CD8-positive, alpha-beta T cell (primary cell): ENCODE measurements at regions of chr5 and their contacts with region 1.

Region 1: DNA sequence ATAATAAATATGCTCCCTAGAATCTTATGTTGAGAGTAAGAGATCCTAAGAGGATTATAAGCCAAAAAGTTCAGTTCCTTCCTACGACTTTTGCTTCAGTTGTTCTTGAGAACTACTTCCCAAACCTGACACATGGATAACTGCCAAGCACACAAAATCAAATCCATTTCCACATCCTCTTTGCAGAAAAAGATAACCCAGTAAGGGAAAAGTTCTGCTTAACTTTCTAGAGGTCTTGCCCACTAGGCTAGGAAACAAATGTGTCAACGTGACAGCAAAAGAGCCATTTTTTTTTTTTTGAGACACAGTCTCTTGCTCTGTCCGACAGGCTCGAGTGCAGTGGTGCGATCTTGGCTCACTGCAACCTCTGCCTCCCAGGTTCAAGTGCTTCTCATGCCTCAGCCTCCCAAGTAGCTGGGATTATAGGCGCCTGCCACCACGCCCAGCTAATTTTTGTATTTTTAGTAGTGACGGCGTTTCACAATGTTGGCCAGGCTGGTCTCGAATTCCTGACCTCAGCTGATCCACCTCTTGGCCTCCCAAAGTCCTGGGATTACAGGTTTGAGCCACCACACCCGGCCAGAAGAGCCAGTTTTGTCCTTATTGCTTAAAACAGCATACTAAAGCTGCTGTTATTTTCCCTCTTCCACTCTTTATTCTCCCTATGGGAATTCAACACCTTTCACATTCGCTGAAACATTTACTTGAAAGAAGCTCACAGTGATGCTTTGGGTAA is 24.2 kb downstream of the CSNK1A1 start:
- DNase-seq: no peak
- ATAC-seq: no peak
- H3K4me3 ChIP-seq: no peak overlapping the region
- H3K4me3 Mint-ChIP-seq: peak overlapping the region; percentile 10
- H3K27ac ChIP-seq: no peak overlapping the region
- H3K27ac Mint-ChIP-seq: no peak overlapping the region
- H3K4me1 ChIP-seq: peaks cover 66% of the 10 kb centered on the region
- H3K4me1 Mint-ChIP-seq: peaks cover 90% of the 10 kb centered on the region
- H3K27me3 ChIP-seq: no peaks in the 10 kb centered on the region
- H3K27me3 Mint-ChIP-seq: no peaks in the 10 kb centered on the region
- CTCF ChIP-seq: no peak

Region 2: GRCh38 chr5:149471406-149472183 is 55.4 kb before region 1 on chr5:
- CTCF ChIA-PET with region 1: no interaction called
- POLR2A ChIA-PET with region 1: no interaction called
- intact Hi-C with region 1: no loop called
- DNase-seq: no peak
- ATAC-seq: no peak
- H3K4me3 ChIP-seq: no peak overlapping the region
- H3K4me3 Mint-ChIP-seq: no peak overlapping the region
- H3K27ac ChIP-seq: no peak overlapping the region
- H3K27ac Mint-ChIP-seq: no peak overlapping the region
- H3K4me1 ChIP-seq: no peaks in the 10 kb centered on the region
- H3K4me1 Mint-ChIP-seq: no peaks in the 10 kb centered on the region
- H3K27me3 ChIP-seq: peaks cover 0 to 7% of the 10 kb centered on the region in 2 experiments
- H3K27me3 Mint-ChIP-seq: peaks cover 14% of the 10 kb centered on the region
- CTCF ChIP-seq: no peak

Region 3: GRCh38 chr5:149489605-149490037 is 37.4 kb before region 1 on chr5:
- CTCF ChIA-PET with region 1: no interaction called
- POLR2A ChIA-PET with region 1: no interaction called
- intact Hi-C with region 1: loop called in 1 of 2 experiments (anchors 5 kb)
- DNase-seq: no peak
- ATAC-seq: no peak
- H3K4me3 ChIP-seq: no peak overlapping the region
- H3K4me3 Mint-ChIP-seq: no peak overlapping the region
- H3K27ac ChIP-seq: no peak overlapping the region
- H3K27ac Mint-ChIP-seq: no peak overlapping the region
- H3K4me1 ChIP-seq: no peaks in the 10 kb centered on the region
- H3K4me1 Mint-ChIP-seq: peaks cover 9% of the 10 kb centered on the region
- H3K27me3 ChIP-seq: no peaks in the 10 kb centered on the region
- H3K27me3 Mint-ChIP-seq: no peaks in the 10 kb centered on the region
- CTCF ChIP-seq: no peak

Region 4: DNA sequence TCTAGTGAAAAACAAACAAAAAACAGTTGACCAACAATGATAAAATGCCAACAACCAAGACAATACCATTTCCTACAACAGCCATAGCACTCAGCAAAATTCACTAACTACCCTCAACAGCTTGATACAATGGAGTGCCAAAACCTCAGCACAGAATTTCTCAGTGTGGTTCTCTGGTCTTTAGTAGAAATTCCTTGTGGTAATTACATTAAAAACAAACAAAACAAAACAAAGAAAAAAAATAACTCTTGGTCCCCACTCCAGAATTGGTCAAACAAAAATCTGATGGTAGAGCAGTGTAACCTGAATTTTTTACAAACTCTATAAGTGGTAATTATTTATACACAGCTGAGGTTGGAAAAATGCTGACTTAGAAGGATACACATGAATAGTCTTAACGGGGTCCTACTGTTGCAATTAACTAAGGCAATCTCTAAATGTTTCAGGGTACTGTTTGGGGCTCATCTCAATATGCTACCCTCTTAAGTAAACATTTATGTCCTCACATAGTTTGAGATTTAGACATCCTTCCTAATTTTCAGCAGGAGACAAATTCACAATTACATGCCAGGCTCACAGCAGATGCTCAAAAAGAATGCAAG is 10.5 kb after region 1 on chr5:
- CTCF ChIA-PET with region 1: interaction called, 4 read pairs
- POLR2A ChIA-PET with region 1: no interaction called
- intact Hi-C with region 1: loop called in 1 of 2 experiments (anchors 1 kb)
- DNase-seq: no peak
- ATAC-seq: no peak
- H3K4me3 ChIP-seq: no peak overlapping the region
- H3K4me3 Mint-ChIP-seq: no peak overlapping the region
- H3K27ac ChIP-seq: no peak overlapping the region
- H3K27ac Mint-ChIP-seq: no peak overlapping the region
- H3K4me1 ChIP-seq: peaks cover 41% of the 10 kb centered on the region
- H3K4me1 Mint-ChIP-seq: peaks cover 70% of the 10 kb centered on the region
- H3K27me3 ChIP-seq: no peaks in the 10 kb centered on the region
- H3K27me3 Mint-ChIP-seq: no peaks in the 10 kb centered on the region
- CTCF ChIP-seq: no peak

Region 5: GRCh38 chr5:149596713-149597112 is 69.7 kb after region 1 on chr5:
- CTCF ChIA-PET with region 1: no interaction called
- POLR2A ChIA-PET with region 1: no interaction called
- intact Hi-C with region 1: no loop called
- DNase-seq: peak in 1 of 9 experiments; percentile 5
- ATAC-seq: no peak
- H3K4me3 ChIP-seq: no peak overlapping the region
- H3K4me3 Mint-ChIP-seq: no peak overlapping the region
- H3K27ac ChIP-seq: no peak overlapping the region
- H3K27ac Mint-ChIP-seq: no peak overlapping the region
- H3K4me1 ChIP-seq: no peaks in the 10 kb centered on the region
- H3K4me1 Mint-ChIP-seq: no peaks in the 10 kb centered on the region
- H3K27me3 ChIP-seq: no peaks in the 10 kb centered on the region
- H3K27me3 Mint-ChIP-seq: peaks cover 4% of the 10 kb centered on the region
- CTCF ChIP-seq: no peak

Region 6: GRCh38 chr5:150357326-150358260 is 830.6 kb after region 1 on chr5 and contains the start of gene TCOF1:
- CTCF ChIA-PET with region 1: no interaction called
- POLR2A ChIA-PET with region 1: no interaction called
- intact Hi-C with region 1: no loop called
- DNase-seq: peak; percentile 93 to 99 (median 97)
- ATAC-seq: peak; percentile 99
- H3K4me3 ChIP-seq: peak within 1 kb of the TSS; percentile 62 to 74
- H3K4me3 Mint-ChIP-seq: peak within 1 kb of the TSS; percentile 82
- H3K27ac ChIP-seq: peak within 1 kb of the TSS; percentile 52 to 70
- H3K27ac Mint-ChIP-seq: peak within 1 kb of the TSS; percentile 87
- H3K4me1 ChIP-seq: peaks cover 18% of the 10 kb centered on the region
- H3K4me1 Mint-ChIP-seq: peaks cover 46% of the 10 kb centered on the region
- H3K27me3 ChIP-seq: no peaks in the 10 kb centered on the region
- H3K27me3 Mint-ChIP-seq: no peaks in the 10 kb centered on the region
- CTCF ChIP-seq: no peak
- total RNA-seq, gene TCOF1: 36.5 to 38.7 TPM